Natural killer cell (primary cell): ENCODE measurements at regions of chr14 and their contacts with region 1.

Region 1: GRCh38 chr14:35416108-35416750 is 11.7 kb upstream of the NFKBIA start:
- DNase-seq: peak; percentile 52 to 90
- ATAC-seq: peak; percentile 52 to 65 (median 57)
- H3K4me3 ChIP-seq: no peak overlapping the region
- H3K4me3 Mint-ChIP-seq: peak overlapping the region; percentile 65
- H3K27ac ChIP-seq: peak overlapping the region; percentile 92
- H3K27ac Mint-ChIP-seq: peak overlapping the region; percentile 88 to 91
- H3K4me1 ChIP-seq: peaks cover 50% of the 10 kb centered on the region
- H3K4me1 Mint-ChIP-seq: peaks cover 51 to 53% of the 10 kb centered on the region in 2 donors
- H3K27me3 ChIP-seq: no peaks in the 10 kb centered on the region
- H3K27me3 Mint-ChIP-seq: no peaks in the 10 kb centered on the region
- CTCF ChIP-seq: no peak

Region 2: DNA sequence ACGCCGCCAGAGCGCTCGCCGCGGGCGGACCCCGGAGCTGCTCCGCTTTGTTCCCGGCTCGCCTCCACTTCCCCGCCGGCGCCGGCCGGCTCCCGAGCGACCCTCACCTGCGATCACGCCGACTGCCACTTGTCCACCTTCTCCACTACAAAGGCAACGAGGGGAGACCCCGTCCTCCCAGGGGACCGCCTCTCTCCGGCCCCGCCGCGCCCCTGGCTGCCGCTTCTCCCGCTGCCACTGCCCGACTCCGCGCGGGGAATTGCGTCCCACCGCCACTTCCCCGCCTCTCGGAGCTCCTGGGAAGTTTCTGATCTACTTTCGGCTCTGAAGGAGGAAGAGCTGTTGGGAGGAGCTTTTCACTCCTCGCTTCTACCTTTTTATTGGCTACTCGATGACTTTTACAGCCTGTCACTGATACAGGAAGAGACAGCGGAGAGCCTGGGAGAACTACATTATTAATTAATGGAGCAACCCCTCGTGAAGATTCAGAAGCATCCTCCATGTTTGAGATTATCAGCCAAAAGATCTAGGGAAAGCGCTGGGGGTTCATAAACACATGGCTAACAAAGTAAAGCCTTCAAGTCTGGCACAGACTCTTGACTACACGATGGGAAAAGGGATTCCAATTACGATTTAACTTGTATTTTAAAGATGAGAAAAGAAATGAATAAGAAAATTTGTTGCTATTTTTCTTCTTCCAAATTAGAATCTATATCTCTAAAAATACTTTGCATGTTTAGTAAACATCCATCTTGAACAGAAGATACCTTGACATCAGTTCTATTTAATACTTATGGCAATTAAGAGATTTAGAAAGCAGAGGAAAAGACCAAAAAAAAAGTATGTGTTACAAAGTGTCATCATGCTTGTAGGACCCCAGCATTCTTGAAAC is 541.0 kb before region 1 on chr14 and contains the start of gene BAZ1A:
- intact Hi-C with region 1: loop called (anchors 5 kb)
- DNase-seq: peak; percentile 41 to 74
- ATAC-seq: peak in 1 of 3 donors; percentile 7
- H3K4me3 ChIP-seq: peak within 1 kb of the TSS; percentile 93
- H3K4me3 Mint-ChIP-seq: peak within 1 kb of the TSS; percentile 99
- H3K27ac ChIP-seq: peak within 1 kb of the TSS; percentile 98
- H3K27ac Mint-ChIP-seq: peak within 1 kb of the TSS; percentile 97 to 99
- H3K4me1 ChIP-seq: peaks cover 8% of the 10 kb centered on the region
- H3K4me1 Mint-ChIP-seq: peaks cover 31 to 34% of the 10 kb centered on the region in 2 donors
- H3K27me3 ChIP-seq: no peaks in the 10 kb centered on the region
- H3K27me3 Mint-ChIP-seq: no peaks in the 10 kb centered on the region
- CTCF ChIP-seq: no peak
- total RNA-seq, gene BAZ1A: 54.6 to 89.5 (median 64.6) TPM

Region 3: DNA sequence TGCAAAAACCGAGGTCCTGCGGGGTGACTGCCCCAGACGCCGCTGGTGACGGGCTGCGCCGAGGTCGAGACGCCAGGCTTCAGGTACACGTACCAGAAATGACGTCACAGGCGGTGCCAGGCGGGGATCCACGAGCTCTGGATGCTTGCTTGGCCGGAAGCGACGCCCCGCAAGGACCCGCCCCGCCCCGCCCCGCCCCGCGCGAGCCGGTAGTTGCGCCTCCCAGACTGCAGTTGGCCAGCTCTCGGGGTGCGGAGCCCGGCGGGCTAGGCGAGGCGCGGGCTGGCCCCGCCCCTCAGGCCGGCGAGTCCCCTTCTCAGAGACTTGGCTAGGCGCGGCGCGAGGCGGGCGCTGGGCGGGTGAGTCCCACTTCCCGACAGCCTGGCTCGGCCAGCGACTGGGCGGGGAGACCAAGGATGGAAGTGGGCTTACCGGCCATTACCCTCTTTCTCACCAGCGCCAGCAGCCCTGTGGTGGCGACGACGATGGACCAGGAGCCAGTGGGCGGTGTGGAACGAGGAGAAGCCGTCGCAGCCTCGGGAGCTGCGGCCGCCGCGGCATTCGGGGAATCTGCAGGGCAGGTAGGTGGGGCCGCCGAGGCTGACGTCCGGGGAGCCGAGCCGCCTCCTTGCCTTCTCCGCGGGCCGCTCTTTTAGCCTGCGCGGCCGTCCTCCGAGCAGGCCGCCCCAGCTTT is 370.0 kb before region 1 on chr14 and contains the start of gene FAM177A1:
- intact Hi-C with region 1: loop called (anchors 5 kb)
- DNase-seq: peak; percentile 94 to 100
- ATAC-seq: peak; percentile 86 to 96 (median 87)
- H3K4me3 ChIP-seq: peak within 1 kb of the TSS; percentile 97
- H3K4me3 Mint-ChIP-seq: peak within 1 kb of the TSS; percentile 97
- H3K27ac ChIP-seq: peak within 1 kb of the TSS; percentile 100
- H3K27ac Mint-ChIP-seq: peak within 1 kb of the TSS; percentile 91 to 93
- H3K4me1 ChIP-seq: peaks cover 11% of the 10 kb centered on the region
- H3K4me1 Mint-ChIP-seq: peaks cover 25 to 31% of the 10 kb centered on the region in 2 donors
- H3K27me3 ChIP-seq: no peaks in the 10 kb centered on the region
- H3K27me3 Mint-ChIP-seq: no peaks in the 10 kb centered on the region
- CTCF ChIP-seq: no peak
- total RNA-seq, gene FAM177A1: 73.8 to 131 (median 79.6) TPM

Region 4: GRCh38 chr14:35140718-35141581 is 275.3 kb before region 1 on chr14:
- intact Hi-C with region 1: loop called (anchors 1 kb)
- DNase-seq: peak in 1 of 2 donors; percentile 42
- ATAC-seq: peak in 1 of 3 donors; percentile 81
- H3K4me3 ChIP-seq: no peak overlapping the region
- H3K4me3 Mint-ChIP-seq: no peak overlapping the region
- H3K27ac ChIP-seq: no peak overlapping the region
- H3K27ac Mint-ChIP-seq: no peak overlapping the region
- H3K4me1 ChIP-seq: no peaks in the 10 kb centered on the region
- H3K4me1 Mint-ChIP-seq: peaks cover 0 to 16% of the 10 kb centered on the region in 2 donors
- H3K27me3 ChIP-seq: no peaks in the 10 kb centered on the region
- H3K27me3 Mint-ChIP-seq: no peaks in the 10 kb centered on the region
- CTCF ChIP-seq: peak; percentile 76

Region 5: GRCh38 chr14:35229495-35230089 is 186.6 kb before region 1 on chr14:
- intact Hi-C with region 1: loop called (anchors 2 kb)
- DNase-seq: peak in 1 of 2 donors; percentile 53
- ATAC-seq: peak in 2 of 3 donors; percentile 66 to 69
- H3K4me3 ChIP-seq: no peak overlapping the region
- H3K4me3 Mint-ChIP-seq: no peak overlapping the region
- H3K27ac ChIP-seq: no peak overlapping the region
- H3K27ac Mint-ChIP-seq: peak overlapping the region in 1 of 2 donors; percentile 77
- H3K4me1 ChIP-seq: peaks cover 8% of the 10 kb centered on the region
- H3K4me1 Mint-ChIP-seq: peaks cover 22 to 25% of the 10 kb centered on the region in 2 donors
- H3K27me3 ChIP-seq: no peaks in the 10 kb centered on the region
- H3K27me3 Mint-ChIP-seq: no peaks in the 10 kb centered on the region
- CTCF ChIP-seq: peak; percentile 38

Region 6: DNA sequence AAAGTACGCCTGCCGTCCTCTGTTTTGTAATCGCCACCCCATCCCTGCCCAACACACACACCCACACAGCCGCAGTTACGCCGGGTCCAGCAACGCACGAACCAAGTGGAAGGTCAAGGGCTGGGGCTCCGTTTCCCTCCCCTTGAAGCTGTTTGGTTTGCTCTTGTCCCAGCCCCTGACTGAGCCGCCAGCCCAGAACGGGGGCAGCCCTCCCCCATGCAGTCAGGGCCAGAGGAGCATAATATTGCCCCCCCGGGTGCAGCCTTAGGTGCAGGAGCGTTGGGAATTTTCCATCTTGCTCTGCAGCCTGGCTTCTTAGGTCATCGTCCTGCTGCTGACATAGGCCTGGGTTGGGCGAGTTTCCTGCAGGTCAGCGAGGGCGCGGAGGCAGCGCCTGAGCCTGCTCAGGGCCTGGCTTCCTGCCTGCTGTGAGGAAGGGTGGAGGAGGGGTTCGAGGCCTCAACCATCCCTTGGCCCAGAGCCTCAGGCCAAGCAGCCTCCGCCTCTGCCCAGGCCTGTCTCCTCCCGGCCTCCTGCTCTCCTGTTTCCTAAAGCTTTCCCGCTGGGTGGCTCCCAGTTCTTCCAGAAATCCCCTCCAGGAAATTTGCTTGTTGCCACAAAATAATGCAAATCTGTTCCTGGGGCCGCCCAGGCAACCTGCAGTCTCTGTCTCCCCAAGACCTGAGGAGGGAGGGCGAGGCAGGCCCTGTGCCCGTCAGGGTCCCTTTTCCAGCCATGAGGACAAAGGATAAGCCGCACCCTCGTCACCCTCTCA is 79.5 kb before region 1 on chr14:
- intact Hi-C with region 1: loop called (anchors 5 kb)
- DNase-seq: no peak
- ATAC-seq: no peak
- H3K4me3 ChIP-seq: no peak overlapping the region
- H3K4me3 Mint-ChIP-seq: peak overlapping the region; percentile 70
- H3K27ac ChIP-seq: no peak overlapping the region
- H3K27ac Mint-ChIP-seq: peak overlapping the region; percentile 79 to 85
- H3K4me1 ChIP-seq: peaks cover 73% of the 10 kb centered on the region
- H3K4me1 Mint-ChIP-seq: peaks cover 33 to 53% of the 10 kb centered on the region in 2 donors
- H3K27me3 ChIP-seq: no peaks in the 10 kb centered on the region
- H3K27me3 Mint-ChIP-seq: no peaks in the 10 kb centered on the region
- CTCF ChIP-seq: no peak

Region 7: DNA sequence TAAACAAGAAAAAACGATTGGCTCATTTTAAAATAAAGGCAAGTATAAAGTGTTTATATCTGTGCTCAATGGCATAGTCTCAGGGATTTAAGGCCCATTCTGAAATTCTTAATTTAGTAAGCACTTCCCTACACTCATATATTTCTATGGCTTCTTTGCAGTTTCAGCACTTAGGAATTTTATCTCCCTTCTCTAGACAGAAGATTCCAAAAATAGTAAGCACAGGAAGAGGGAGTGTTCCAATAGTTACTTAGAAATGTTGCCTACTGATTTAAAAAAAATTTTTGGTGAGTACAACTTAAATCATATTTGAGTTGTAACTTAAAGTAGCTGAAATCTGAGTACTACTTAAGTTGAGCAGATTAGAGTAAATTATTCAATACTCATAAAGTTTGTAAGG is 137.6 kb after region 1 on chr14:
- intact Hi-C with region 1: no loop called
- DNase-seq: no peak
- ATAC-seq: no peak
- H3K4me3 ChIP-seq: no peak overlapping the region
- H3K4me3 Mint-ChIP-seq: no peak overlapping the region
- H3K27ac ChIP-seq: no peak overlapping the region
- H3K27ac Mint-ChIP-seq: no peak overlapping the region
- H3K4me1 ChIP-seq: no peaks in the 10 kb centered on the region
- H3K4me1 Mint-ChIP-seq: no peaks in the 10 kb centered on the region
- H3K27me3 ChIP-seq: no peaks in the 10 kb centered on the region
- H3K27me3 Mint-ChIP-seq: no peaks in the 10 kb centered on the region
- CTCF ChIP-seq: no peak

Region 8: GRCh38 chr14:35808076-35808652 is 391.9 kb after region 1 on chr14:
- intact Hi-C with region 1: loop called (anchors 10 kb)
- DNase-seq: peak in 1 of 2 donors; percentile 52
- ATAC-seq: no peak
- H3K4me3 ChIP-seq: peak overlapping the region; percentile 64
- H3K4me3 Mint-ChIP-seq: peak overlapping the region; percentile 99
- H3K27ac ChIP-seq: peak overlapping the region; percentile 89
- H3K27ac Mint-ChIP-seq: peak overlapping the region; percentile 90 to 99
- H3K4me1 ChIP-seq: peaks cover 10% of the 10 kb centered on the region
- H3K4me1 Mint-ChIP-seq: peaks cover 33% of the 10 kb centered on the region in 2 donors
- H3K27me3 ChIP-seq: no peaks in the 10 kb centered on the region
- H3K27me3 Mint-ChIP-seq: no peaks in the 10 kb centered on the region
- CTCF ChIP-seq: no peak